Thyroid gland (tissue), 4 donors: ENCODE measurements at regions of chr12 and their contacts with region 1.

Region 1: DNA sequence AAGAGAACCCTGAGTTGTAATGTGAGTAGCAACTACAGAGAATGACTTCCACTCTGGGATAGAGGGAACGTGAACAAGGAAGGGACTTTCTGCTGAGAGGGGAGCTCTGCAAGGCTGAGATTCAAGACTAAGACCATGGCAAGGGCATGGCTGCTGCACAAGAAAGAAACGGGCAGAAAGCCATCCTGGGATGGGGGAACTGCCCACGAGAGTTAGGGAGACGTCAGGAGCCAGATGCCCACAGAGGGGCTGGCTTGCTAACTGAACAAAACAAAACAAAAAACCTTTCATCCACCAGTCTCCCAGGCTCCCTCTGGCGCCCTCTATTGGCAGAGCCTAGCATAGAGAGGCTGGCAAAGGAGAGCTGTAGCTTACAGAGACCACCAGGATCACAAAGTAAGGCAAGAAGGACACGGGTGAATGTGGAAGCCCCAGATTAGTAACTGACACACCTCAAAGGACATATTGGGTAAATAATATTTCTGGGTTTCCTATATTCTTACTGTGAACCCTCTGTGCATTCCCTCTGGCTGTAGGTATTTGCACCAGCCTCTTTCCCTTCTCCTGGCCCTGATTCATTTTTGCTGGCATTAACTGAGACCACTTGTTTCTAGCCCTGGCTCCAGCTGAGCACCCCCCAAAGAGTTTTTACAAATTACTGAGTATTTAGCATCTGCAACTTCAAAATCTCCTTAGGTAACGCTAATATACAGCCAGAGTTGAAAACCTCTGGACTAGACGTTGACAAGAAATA is 338.3 kb downstream of the EMP1 start:
- DNase-seq: peak; percentile 71 to 81
- H3K4me3 ChIP-seq: no peak overlapping the region
- H3K27ac ChIP-seq: no peak overlapping the region
- H3K4me1 ChIP-seq: peaks cover 5 to 6% of the 10 kb centered on the region in 2 donors
- H3K27me3 ChIP-seq: no peaks in the 10 kb centered on the region
- CTCF ChIP-seq: peak; percentile 62 to 94 (median 83)
- POLR2A ChIP-seq: no peak

Region 2: DNA sequence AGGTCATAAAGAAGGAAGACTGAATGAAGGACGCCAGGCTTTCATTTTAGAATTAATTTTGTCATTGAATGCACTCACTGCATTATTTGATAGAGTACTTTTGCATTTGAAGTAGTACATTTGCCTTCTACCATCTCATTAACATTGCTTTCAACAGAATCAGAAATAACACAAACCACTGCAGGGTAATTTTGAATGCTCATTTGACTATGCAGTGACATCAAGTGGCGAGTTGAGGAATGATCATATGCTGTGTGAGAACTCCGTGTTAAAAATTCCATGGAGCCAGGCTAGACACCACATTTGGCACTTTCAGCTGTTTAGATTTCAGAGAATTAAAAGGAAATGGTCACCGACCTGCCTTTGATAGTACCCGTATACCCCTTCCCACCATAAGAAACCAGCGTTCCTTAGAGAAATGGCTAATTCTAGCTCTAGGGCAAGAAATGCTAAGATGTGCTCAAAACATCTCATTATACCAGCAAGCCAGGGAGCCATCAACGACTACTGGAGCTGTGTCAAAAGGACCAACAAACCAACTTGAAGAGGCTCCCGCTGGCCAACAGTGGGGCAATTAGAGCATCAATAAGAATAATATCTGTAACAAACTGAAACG is 551.3 kb before region 1 on chr12:
- intact Hi-C with region 1: no loop called
- DNase-seq: peak in 1 of 2 donors; percentile 30
- H3K4me3 ChIP-seq: no peak overlapping the region
- H3K27ac ChIP-seq: no peak overlapping the region
- H3K4me1 ChIP-seq: peaks cover 14 to 29% of the 10 kb centered on the region in 2 donors
- H3K27me3 ChIP-seq: no peaks in the 10 kb centered on the region
- CTCF ChIP-seq: peak in 5 of 6 experiments; percentile 16 to 73 (median 61)
- POLR2A ChIP-seq: no peak

Region 3: DNA sequence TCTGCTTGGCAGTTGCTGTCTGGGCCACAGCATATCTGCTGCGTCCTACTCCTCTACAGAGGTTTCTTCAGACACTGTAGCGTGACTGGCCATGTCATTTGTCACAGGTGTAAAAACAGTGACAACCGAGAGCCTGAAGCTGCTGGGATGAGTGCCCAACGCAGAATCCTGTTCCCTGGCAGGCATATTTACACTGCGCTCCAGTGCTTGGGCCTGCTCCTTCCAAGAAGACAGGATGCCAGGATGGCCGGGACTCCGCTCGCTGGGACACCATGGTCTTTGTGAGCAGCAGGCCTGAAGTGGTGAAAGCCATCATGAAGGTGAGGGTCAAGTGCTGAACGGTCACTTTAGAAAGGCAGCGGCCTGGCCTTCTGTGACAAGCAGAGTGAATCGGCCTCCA is 166.8 kb before region 1 on chr12:
- intact Hi-C with region 1: loop called (anchors 5 kb)
- DNase-seq: peak; percentile 21 to 82
- H3K4me3 ChIP-seq: no peak overlapping the region
- H3K27ac ChIP-seq: peak overlapping the region in 1 of 3 donors; percentile 39
- H3K4me1 ChIP-seq: peaks cover 0 to 15% of the 10 kb centered on the region in 2 donors
- H3K27me3 ChIP-seq: no peaks in the 10 kb centered on the region
- CTCF ChIP-seq: no peak
- POLR2A ChIP-seq: no peak